Panc1 (cell line): ENCODE measurements at regions of chr22 and their contacts with region 1.

Region 1: GRCh38 chr22:22463855-22464540 is 44.5 kb downstream of the ZNF280B start:
- DNase-seq: peak; percentile 15
- ATAC-seq: 0 out of 2 replicates have a peak, but pooled peaks have one; percentile 72
- H3K4me3 ChIP-seq: no peak overlapping the region
- H3K27ac ChIP-seq: no peak overlapping the region
- H3K4me1 ChIP-seq: no peaks in the 10 kb centered on the region
- H3K27me3 ChIP-seq: no peaks in the 10 kb centered on the region; the same call in 1 of the 2 replicates
- CTCF ChIP-seq: peak; percentile 67

Region 2: GRCh38 chr22:22422629-22423112 is 41.3 kb before region 1 on chr22:
- CTCF ChIA-PET with region 1: no interaction called
- POLR2A ChIA-PET with region 1: no interaction called
- in situ Hi-C with region 1: no loop called
- intact Hi-C with region 1: no loop called
- DNase-seq: no peak
- ATAC-seq: peak; percentile 60; the same call in 1 of the 2 replicates
- H3K4me3 ChIP-seq: no peak overlapping the region
- H3K27ac ChIP-seq: no peak overlapping the region
- H3K4me1 ChIP-seq: no peaks in the 10 kb centered on the region; the same call in 1 of the 2 replicates
- H3K27me3 ChIP-seq: peaks cover 30% of the 10 kb centered on the region
- CTCF ChIP-seq: peak; percentile 86

Region 3: GRCh38 chr22:22593964-22594656 is 130.1 kb after region 1 on chr22:
- CTCF ChIA-PET with region 1: no interaction called
- POLR2A ChIA-PET with region 1: no interaction called
- in situ Hi-C with region 1: no loop called
- intact Hi-C with region 1: loop called (anchors 10 kb)
- DNase-seq: peak; percentile 20
- ATAC-seq: no peak; the same call in 1 of the 2 replicates
- H3K4me3 ChIP-seq: no peak overlapping the region
- H3K27ac ChIP-seq: no peak overlapping the region
- H3K4me1 ChIP-seq: no peaks in the 10 kb centered on the region
- H3K27me3 ChIP-seq: no peaks in the 10 kb centered on the region
- CTCF ChIP-seq: peak; percentile 82

Region 4: GRCh38 chr22:23069502-23070357 is 605.7 kb after region 1 on chr22:
- CTCF ChIA-PET with region 1: no interaction called
- POLR2A ChIA-PET with region 1: interaction called, 11 read pairs
- in situ Hi-C with region 1: no loop called
- intact Hi-C with region 1: no loop called
- DNase-seq: no peak
- ATAC-seq: peak; percentile 98
- H3K4me3 ChIP-seq: peak overlapping the region; percentile 55 to 77
- H3K27ac ChIP-seq: peak overlapping the region; percentile 66; the same call in 1 of the 2 replicates
- H3K4me1 ChIP-seq: no peaks in the 10 kb centered on the region
- H3K27me3 ChIP-seq: no peaks in the 10 kb centered on the region
- CTCF ChIP-seq: no peak